ENCODE measurements at regions of chr6 and their contacts with region 1.

Region 1: GRCh38 chr6:2103644-2104523 is 141.5 kb downstream of the GMDS start:
- ATAC-seq: peak in 5 of 8 experiments; percentile 53 to 87 (median 80)
- H3K4me3 ChIP-seq: no peak overlapping the region
- H3K27ac ChIP-seq: no peak overlapping the region
- H3K4me1 ChIP-seq: no peaks in the 10 kb centered on the region

Region 2: DNA sequence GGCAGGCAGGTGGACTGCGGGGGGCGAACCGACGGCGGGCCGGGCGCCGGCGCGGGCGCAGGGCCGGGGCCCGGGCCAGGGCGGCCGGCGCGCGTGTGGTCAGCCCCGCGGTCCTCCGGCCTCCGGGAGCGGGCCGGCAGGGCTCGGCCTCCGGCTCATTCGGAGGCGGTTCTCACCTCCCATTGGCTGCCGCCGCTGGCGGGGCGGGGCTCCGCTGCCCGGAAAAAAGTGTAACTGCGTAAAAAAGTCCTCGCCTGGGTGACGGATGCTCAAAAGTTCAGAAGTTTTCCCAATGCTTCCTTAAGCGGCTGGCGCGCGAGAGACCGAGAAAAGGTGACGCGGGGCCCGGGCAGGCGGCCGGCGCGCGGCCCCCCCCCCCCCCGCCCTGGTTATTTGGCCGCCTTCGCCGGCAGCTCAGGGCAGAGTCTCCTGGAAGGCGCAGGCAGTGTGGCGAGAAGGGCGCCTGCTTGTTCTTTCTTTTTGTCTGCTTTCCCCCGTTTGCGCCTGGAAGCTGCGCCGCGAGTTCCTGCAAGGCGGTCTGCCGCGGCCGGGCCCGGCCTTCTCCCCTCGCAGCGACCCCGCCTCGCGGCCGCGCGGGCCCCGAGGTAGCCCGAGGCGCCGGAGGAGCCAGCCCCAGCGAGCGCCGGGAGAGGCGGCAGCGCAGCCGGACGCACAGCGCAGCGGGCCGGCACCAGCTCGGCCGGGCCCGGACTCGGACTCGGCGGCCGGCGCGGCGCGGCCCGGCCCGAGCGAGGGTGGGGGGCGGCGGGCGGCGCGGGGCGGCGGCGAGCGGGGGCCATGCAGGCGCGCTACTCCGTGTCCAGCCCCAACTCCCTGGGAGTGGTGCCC is 494.0 kb before region 1 on chr6 and contains the start of gene FOXC1:
- in situ Hi-C with region 1: loop called in 2 of 9 experiments (anchors 25 kb)
- ATAC-seq: peak; percentile 54 to 81 (median 70)
- H3K4me3 ChIP-seq: peak within 1 kb of the TSS; percentile 14 to 42 (median 22)
- H3K27ac ChIP-seq: no peak within 1 kb of the TSS
- H3K4me1 ChIP-seq: peaks cover 2 to 25% of the 10 kb centered on the region in 2 donors
- total RNA-seq, gene FOXC1: 0.05 to 44.4 (median 1.0) TPM

Region 3: GRCh38 chr6:2344319-2344905 is 240.5 kb after region 1 on chr6:
- in situ Hi-C with region 1: loop called in 1 of 9 experiments (anchors 25 kb)
- ATAC-seq: no peak
- H3K4me3 ChIP-seq: no peak overlapping the region
- H3K27ac ChIP-seq: no peak overlapping the region
- H3K4me1 ChIP-seq: peaks cover 0 to 6% of the 10 kb centered on the region in 2 donors